Heart left ventricle (tissue), 16 donors: ENCODE measurements at regions of chr9 and their contacts with region 1.

Region 1: GRCh38 chr9:123011878-123012528 is 21.5 kb upstream of the GPR21 start:
- DNase-seq: no peak
- ATAC-seq: no peak
- H3K4me3 ChIP-seq: no peak overlapping the region
- H3K27ac ChIP-seq: no peak overlapping the region
- H3K4me1 ChIP-seq: peaks cover 0 to 4% (median 0%) of the 10 kb centered on the region in 12 donors
- H3K27me3 ChIP-seq: no peaks in the 10 kb centered on the region
- CTCF ChIP-seq: no peak
- POLR2A ChIP-seq: no peak

Region 2: DNA sequence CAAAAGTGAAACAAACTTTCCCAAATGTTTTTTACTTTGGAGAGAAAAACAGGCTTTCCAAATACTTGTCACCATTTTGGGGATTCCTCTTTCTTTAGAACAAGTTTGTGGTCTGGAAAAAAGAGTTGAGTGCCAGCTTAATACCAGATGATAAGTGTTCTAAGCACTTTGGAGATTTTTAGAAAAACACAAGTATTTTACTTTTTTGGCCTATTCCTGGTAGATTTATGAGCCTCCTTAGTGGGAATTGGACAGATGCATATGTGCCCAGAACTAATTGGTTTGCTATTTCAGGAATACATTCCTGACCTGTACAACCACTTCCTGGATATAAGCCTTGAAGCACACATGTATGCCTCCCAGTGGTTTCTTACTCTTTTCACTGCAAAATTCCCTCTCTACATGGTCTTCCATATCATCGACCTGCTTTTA is 62.0 kb after region 1 on chr9:
- intact Hi-C with region 1: loop called in 1 of 10 experiments (anchors 5 kb)
- DNase-seq: no peak
- ATAC-seq: peak in 1 of 4 donors; percentile 30
- H3K4me3 ChIP-seq: peak overlapping the region in 1 of 12 donors; percentile 38
- H3K27ac ChIP-seq: peak overlapping the region in 6 of 12 donors; percentile 0 to 50 (median 18)
- H3K4me1 ChIP-seq: peaks cover 0 to 27% (median 12%) of the 10 kb centered on the region in 12 donors
- H3K27me3 ChIP-seq: no peaks in the 10 kb centered on the region
- CTCF ChIP-seq: peak in 1 of 12 donors; percentile 11
- POLR2A ChIP-seq: no peak

Region 3: GRCh38 chr9:123302348-123303214 is 290.6 kb after region 1 on chr9:
- intact Hi-C with region 1: no loop called
- DNase-seq: no peak
- ATAC-seq: peak in 1 of 4 donors; percentile 12
- H3K4me3 ChIP-seq: no peak overlapping the region
- H3K27ac ChIP-seq: no peak overlapping the region
- H3K4me1 ChIP-seq: peaks cover 0 to 25% (median 0%) of the 10 kb centered on the region in 12 donors
- H3K27me3 ChIP-seq: no peaks in the 10 kb centered on the region
- CTCF ChIP-seq: no peak
- POLR2A ChIP-seq: no peak